ENCODE measurements at regions of chr10 and their contacts with region 1.

Region 1: GRCh38 chr10:35598384-35598783 is 6.8 kb upstream of the GJD4 start:
- DNase-seq: no peak
- H3K4me3 ChIP-seq: no peak overlapping the region
- H3K27ac ChIP-seq: no peak overlapping the region
- H3K4me1 ChIP-seq: peaks cover 9% of the 10 kb centered on the region
- H3K27me3 ChIP-seq: no peaks in the 10 kb centered on the region
- CTCF ChIP-seq: peak; percentile 39; the same call in 1 of the 2 replicates

Region 2: GRCh38 chr10:35259769-35260397 is 338.5 kb before region 1 on chr10:
- CTCF ChIA-PET with region 1: no interaction called
- POLR2A ChIA-PET with region 1: no interaction called
- intact Hi-C with region 1: loop called (anchors 10 kb)
- DNase-seq: peak; percentile 51
- H3K4me3 ChIP-seq: no peak overlapping the region
- H3K27ac ChIP-seq: peak overlapping the region; percentile 40
- H3K4me1 ChIP-seq: no peaks in the 10 kb centered on the region
- H3K27me3 ChIP-seq: no peaks in the 10 kb centered on the region
- CTCF ChIP-seq: no peak

Region 3: DNA sequence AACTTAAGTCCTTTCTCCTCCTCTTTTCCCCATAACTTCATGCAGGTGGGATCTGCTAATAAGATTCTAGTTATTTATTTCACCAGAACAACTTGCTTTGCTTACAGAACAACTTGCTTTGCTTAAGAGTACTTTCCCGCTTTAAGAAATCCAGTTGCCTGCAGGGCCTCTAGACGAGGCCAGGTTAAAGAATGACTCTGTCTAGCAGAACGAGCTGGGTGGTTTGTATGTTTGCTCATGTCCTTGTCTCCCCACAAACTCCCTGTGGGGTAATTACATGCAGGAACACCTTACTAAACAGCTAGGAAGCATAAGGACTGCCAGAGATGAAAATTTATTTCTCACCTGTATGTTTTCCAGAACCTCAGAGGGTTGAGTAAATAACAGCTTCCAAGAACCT is 52.5 kb after region 1 on chr10:
- CTCF ChIA-PET with region 1: no interaction called
- POLR2A ChIA-PET with region 1: no interaction called
- intact Hi-C with region 1: no loop called
- DNase-seq: no peak
- H3K4me3 ChIP-seq: no peak overlapping the region
- H3K27ac ChIP-seq: no peak overlapping the region
- H3K4me1 ChIP-seq: no peaks in the 10 kb centered on the region
- H3K27me3 ChIP-seq: no peaks in the 10 kb centered on the region
- CTCF ChIP-seq: no peak